Activated B cell treated with CpG ODN at 0.5 μM for 24 hours (primary cell): ENCODE measurements at regions of chr2 and their contacts with region 1.

Region 1: GRCh38 chr2:230007931-230008707 is 60.6 kb downstream of the SLC16A14 start:
- DNase-seq: peak; percentile 63
- ATAC-seq: peak; percentile 75
- H3K4me3 Mint-ChIP-seq: no peak overlapping the region
- H3K27ac Mint-ChIP-seq: no peak overlapping the region
- H3K4me1 Mint-ChIP-seq: peaks cover 3% of the 10 kb centered on the region
- H3K27me3 Mint-ChIP-seq: no peaks in the 10 kb centered on the region
- CTCF ChIP-seq: peak; percentile 54

Region 2: DNA sequence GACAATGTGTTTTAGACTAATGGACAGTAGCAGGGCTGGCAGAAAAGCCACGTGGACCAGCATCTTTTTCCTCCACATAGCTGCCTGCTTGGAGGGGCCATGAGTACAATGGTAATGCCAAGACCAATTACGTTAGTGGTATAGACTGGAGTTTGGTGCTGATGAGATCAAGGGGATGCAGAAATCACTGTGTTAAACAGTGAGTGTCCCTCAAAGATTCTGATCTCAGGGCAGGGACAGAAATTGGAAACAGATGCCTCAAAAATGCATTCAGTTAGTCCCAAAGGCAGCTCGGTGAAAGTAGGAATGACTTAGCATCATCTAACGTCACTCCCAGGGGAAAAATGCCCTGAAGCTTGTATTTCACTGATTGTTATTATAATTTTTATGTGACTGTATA is 11.8 kb before region 1 on chr2:
- CTCF ChIA-PET with region 1: no interaction called
- POLR2A ChIA-PET with region 1: no interaction called
- intact Hi-C with region 1: no loop called
- DNase-seq: no peak
- ATAC-seq: no peak
- H3K4me3 Mint-ChIP-seq: no peak overlapping the region
- H3K27ac Mint-ChIP-seq: no peak overlapping the region
- H3K4me1 Mint-ChIP-seq: peaks cover 13% of the 10 kb centered on the region
- H3K27me3 Mint-ChIP-seq: no peaks in the 10 kb centered on the region
- CTCF ChIP-seq: no peak

Region 3: GRCh38 chr2:230160112-230160660 is 152.1 kb after region 1 on chr2:
- CTCF ChIA-PET with region 1: interaction called, 13 read pairs
- POLR2A ChIA-PET with region 1: no interaction called
- intact Hi-C with region 1: loop called (anchors 1 kb)
- DNase-seq: peak; percentile 34
- ATAC-seq: peak; percentile 42
- H3K4me3 Mint-ChIP-seq: no peak overlapping the region
- H3K27ac Mint-ChIP-seq: no peak overlapping the region
- H3K4me1 Mint-ChIP-seq: peaks cover 24% of the 10 kb centered on the region
- H3K27me3 Mint-ChIP-seq: no peaks in the 10 kb centered on the region
- CTCF ChIP-seq: no peak

Region 4: DNA sequence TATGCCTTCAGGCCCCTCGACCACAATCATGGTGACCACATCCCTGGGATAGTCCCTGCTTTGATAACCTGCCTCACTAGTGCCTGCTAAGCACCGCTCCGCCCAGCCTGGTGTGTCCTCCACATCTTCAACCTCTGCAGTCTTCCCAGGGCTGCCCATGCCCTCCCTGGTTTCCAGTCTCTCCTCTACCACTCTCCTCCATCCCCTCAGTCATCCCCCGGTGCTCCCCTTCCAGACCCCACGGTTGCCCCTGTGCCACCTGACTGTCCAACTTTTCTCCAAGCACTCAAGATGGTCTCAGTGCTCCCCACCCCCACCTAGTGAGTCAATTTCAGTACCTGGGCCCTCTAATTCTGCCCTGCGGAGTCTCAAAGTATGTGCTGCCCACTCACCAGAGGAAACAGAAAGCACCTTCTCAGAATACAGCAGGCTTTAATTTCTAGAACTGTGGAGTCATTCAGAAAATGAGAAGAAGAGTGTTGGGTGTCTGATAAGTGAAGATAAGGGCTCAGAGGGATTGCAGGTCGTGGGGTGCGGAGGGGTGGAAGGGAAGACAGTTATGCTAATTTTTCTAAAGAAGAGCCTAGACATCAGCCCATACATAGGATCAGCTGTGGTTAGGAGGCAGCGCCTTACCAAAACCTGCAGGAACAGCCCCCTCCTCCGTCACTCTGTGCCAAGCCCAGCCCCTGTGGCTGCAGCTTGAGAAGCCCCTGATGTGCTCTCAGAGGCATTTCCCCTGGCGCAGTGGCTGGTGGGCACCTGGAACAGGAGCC is 650.9 kb after region 1 on chr2:
- CTCF ChIA-PET with region 1: no interaction called
- POLR2A ChIA-PET with region 1: interaction called, 10 read pairs
- intact Hi-C with region 1: no loop called
- DNase-seq: no peak
- ATAC-seq: peak; percentile 20
- H3K4me3 Mint-ChIP-seq: peak overlapping the region; percentile 5
- H3K27ac Mint-ChIP-seq: peak overlapping the region; percentile 42
- H3K4me1 Mint-ChIP-seq: peaks cover 74% of the 10 kb centered on the region
- H3K27me3 Mint-ChIP-seq: no peaks in the 10 kb centered on the region
- CTCF ChIP-seq: no peak

Region 5: DNA sequence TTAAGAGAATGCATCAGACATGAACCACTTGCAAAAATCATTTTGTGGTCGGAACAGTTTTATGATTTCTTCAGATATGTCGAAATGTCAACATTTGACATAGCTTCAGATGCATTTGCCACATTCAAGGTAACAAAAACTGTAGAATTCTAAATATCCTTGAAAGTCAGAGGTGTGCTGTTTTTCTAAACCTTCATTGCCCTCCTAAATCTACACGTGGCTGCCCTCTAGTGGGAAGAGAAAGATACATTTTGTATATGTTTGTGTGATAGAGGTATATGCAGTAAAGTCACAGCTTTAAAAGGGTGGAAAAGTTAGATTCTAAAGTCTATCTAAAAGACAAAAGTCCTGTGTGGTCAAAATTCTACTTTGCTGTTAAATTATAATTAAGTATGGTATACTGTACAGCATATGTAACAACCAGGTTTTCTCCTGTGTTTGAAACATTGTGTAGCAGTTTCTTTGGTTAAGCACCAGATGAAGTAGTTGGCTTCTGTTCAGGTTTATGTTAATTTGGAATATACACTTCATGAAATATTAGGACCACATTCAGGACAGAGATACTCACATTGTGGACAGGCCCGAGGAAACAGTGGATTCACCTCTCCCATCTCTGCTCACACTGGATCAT is 790.8 kb after region 1 on chr2:
- CTCF ChIA-PET with region 1: interaction called, 18 read pairs
- POLR2A ChIA-PET with region 1: no interaction called
- intact Hi-C with region 1: loop called (anchors 1 kb)
- DNase-seq: no peak
- ATAC-seq: peak; percentile 46
- H3K4me3 Mint-ChIP-seq: no peak overlapping the region
- H3K27ac Mint-ChIP-seq: no peak overlapping the region
- H3K4me1 Mint-ChIP-seq: peaks cover 14% of the 10 kb centered on the region
- H3K27me3 Mint-ChIP-seq: no peaks in the 10 kb centered on the region
- CTCF ChIP-seq: no peak

Region 6: DNA sequence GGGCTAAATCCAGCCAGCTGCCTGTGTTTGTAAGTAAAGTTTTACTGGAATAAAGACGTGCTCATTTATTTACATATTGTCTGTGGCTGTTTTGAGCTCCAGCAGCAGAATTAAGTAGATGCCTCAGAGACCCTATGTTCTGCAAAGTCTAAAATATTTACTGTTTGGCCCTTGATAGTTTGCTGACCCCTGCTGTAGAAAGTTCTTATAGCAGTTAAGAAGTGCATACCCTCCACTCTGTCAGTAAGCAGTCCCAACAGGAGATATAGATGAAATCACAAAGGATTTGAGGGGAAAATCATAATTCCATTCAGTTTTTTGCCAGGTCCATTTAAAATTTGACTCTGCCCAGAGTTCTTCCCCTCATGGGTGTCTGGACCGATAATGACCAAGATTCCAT is 806.5 kb after region 1 on chr2:
- CTCF ChIA-PET with region 1: no interaction called
- POLR2A ChIA-PET with region 1: no interaction called
- intact Hi-C with region 1: loop called (anchors 1 kb)
- DNase-seq: no peak
- ATAC-seq: no peak
- H3K4me3 Mint-ChIP-seq: no peak overlapping the region
- H3K27ac Mint-ChIP-seq: no peak overlapping the region
- H3K4me1 Mint-ChIP-seq: no peaks in the 10 kb centered on the region
- H3K27me3 Mint-ChIP-seq: no peaks in the 10 kb centered on the region
- CTCF ChIP-seq: no peak

Region 7: DNA sequence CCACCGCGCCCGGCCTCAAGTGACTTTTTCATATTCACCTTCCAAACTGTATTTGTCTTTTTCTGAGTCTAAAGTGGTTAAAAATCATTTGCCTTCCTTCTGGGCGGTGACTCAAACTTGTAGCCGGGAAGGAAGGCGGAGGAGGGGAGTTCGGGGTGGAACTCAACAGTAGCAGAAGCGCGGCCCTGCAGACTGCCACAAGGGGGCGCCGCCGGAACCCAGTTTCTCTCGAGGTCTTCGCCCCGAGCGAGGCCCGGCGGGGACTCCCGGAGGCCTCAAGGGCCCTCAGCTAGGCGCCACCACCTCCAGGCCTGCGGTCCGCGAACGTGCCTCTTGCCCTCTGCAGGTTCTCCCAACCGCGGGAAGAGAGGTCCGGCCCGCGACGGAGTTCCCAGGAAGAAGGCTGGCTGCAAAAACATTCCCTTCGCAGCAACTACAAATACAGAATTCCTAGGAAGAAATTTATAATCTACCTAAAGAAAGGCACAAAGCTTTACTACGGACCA is 839.8 kb after region 1 on chr2:
- CTCF ChIA-PET with region 1: no interaction called
- POLR2A ChIA-PET with region 1: no interaction called
- intact Hi-C with region 1: loop called (anchors 1 kb)
- DNase-seq: peak; percentile 84
- ATAC-seq: peak; percentile 97
- H3K4me3 Mint-ChIP-seq: peak overlapping the region; percentile 50
- H3K27ac Mint-ChIP-seq: no peak overlapping the region
- H3K4me1 Mint-ChIP-seq: peaks cover 8% of the 10 kb centered on the region
- H3K27me3 Mint-ChIP-seq: peaks cover 22% of the 10 kb centered on the region
- CTCF ChIP-seq: peak; percentile 24